IMR-90 (cell line): ENCODE measurements at regions of chr4 and their contacts with region 1.

Region 1: DNA sequence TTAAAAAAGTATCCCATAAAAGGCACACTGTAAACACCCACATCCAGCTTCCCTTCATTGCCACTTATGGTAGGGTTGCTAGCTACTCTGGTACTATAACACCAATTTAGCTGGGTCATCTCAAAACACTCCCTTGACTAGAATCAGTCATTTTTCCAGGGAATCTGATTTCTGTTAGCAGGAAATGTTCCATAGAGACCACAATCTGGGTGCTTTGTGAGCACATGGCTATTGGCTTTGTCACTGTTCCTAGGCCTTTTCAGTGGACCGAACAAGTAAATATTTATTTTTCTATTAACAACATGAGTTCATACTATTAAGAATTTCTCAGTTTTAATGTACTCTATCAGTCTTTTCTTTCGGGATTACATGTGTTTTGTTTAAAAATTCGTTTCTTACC is 404.7 kb upstream of the GNPDA2 start:
- DNase-seq: no peak
- ATAC-seq: no peak
- H3K4me3 ChIP-seq: no peak overlapping the region
- H3K27ac ChIP-seq: no peak overlapping the region
- H3K4me1 ChIP-seq: no peaks in the 10 kb centered on the region
- H3K27me3 ChIP-seq: no peaks in the 10 kb centered on the region
- CTCF ChIP-seq: no peak
- POLR2A ChIP-seq: no peak
- RAD21 ChIP-seq: no peak

Region 2: GRCh38 chr4:45155081-45155777 is 24.2 kb after region 1 on chr4:
- CTCF ChIA-PET with region 1: no interaction called
- POLR2A ChIA-PET with region 1: no interaction called
- dilution Hi-C with region 1: no loop called
- in situ Hi-C with region 1: no loop called
- intact Hi-C with region 1: loop called (anchors 1 kb)
- DNase-seq: no peak
- ATAC-seq: no peak
- H3K4me3 ChIP-seq: no peak overlapping the region
- H3K27ac ChIP-seq: no peak overlapping the region
- H3K4me1 ChIP-seq: no peaks in the 10 kb centered on the region
- H3K27me3 ChIP-seq: no peaks in the 10 kb centered on the region
- CTCF ChIP-seq: no peak
- POLR2A ChIP-seq: no peak
- RAD21 ChIP-seq: no peak

Region 3: GRCh38 chr4:45346816-45347435 is 215.9 kb after region 1 on chr4:
- CTCF ChIA-PET with region 1: no interaction called
- POLR2A ChIA-PET with region 1: no interaction called
- dilution Hi-C with region 1: no loop called
- in situ Hi-C with region 1: no loop called
- intact Hi-C with region 1: no loop called
- DNase-seq: no peak
- ATAC-seq: no peak
- H3K4me3 ChIP-seq: no peak overlapping the region
- H3K27ac ChIP-seq: no peak overlapping the region
- H3K4me1 ChIP-seq: no peaks in the 10 kb centered on the region
- H3K27me3 ChIP-seq: no peaks in the 10 kb centered on the region
- CTCF ChIP-seq: no peak
- POLR2A ChIP-seq: no peak
- RAD21 ChIP-seq: no peak